ENCODE measurements at regions of chr16 and their contacts with region 1.

Region 1: DNA sequence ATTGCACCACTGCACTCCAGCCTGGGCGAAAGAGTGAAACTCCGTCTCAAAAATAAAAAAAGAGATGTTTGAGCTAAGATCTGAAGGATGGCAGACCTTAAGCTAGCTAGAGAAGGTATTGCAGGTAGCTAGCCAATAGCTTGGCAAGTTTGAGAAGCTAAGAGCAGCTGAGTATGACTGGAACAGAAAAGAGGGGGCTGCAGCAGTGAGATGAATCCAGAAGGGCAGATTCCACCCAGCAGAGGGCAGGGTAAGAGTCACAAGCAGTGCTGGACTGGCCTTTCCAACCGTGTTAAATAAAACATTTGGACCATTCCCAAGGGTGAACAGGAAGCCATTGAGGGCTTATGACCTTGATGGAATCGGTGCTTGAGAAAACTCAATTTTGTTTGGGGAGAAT is 5.7 kb upstream of the PHAF1 start:
- DNase-seq: no peak
- ATAC-seq: peak in 1 of 2 donors; percentile 38
- H3K4me3 ChIP-seq: no peak overlapping the region
- H3K27ac ChIP-seq: no peak overlapping the region
- H3K4me1 ChIP-seq: peaks cover 4 to 21% of the 10 kb centered on the region in 2 donors
- H3K27me3 ChIP-seq: no peaks in the 10 kb centered on the region
- CTCF ChIP-seq: peak in 4 of 5 experiments; percentile 5 to 42 (median 24)
- POLR2A ChIP-seq: no peak

Region 2: GRCh38 chr16:66845791-66846221 is 258.3 kb before region 1 on chr16:
- in situ Hi-C with region 1: no loop called
- intact Hi-C with region 1: no loop called
- DNase-seq: peak in 1 of 2 donors; percentile 22
- ATAC-seq: peak in 1 of 2 donors; percentile 77
- H3K4me3 ChIP-seq: no peak overlapping the region
- H3K27ac ChIP-seq: no peak overlapping the region
- H3K4me1 ChIP-seq: peaks cover 0 to 6% of the 10 kb centered on the region in 2 donors
- H3K27me3 ChIP-seq: peaks cover 25 to 30% (median 26%) of the 10 kb centered on the region in 3 donors
- CTCF ChIP-seq: no peak
- POLR2A ChIP-seq: no peak

Region 3: GRCh38 chr16:67017810-67018488 is 86.1 kb before region 1 on chr16:
- in situ Hi-C with region 1: no loop called
- intact Hi-C with region 1: loop called (anchors 5 kb)
- DNase-seq: peak; percentile 52 to 82
- ATAC-seq: peak; percentile 79 to 92
- H3K4me3 ChIP-seq: no peak overlapping the region
- H3K27ac ChIP-seq: no peak overlapping the region
- H3K4me1 ChIP-seq: peaks cover 5 to 7% of the 10 kb centered on the region in 2 donors
- H3K27me3 ChIP-seq: no peaks in the 10 kb centered on the region
- CTCF ChIP-seq: peak; percentile 64 to 85 (median 75)
- POLR2A ChIP-seq: no peak

Region 4: DNA sequence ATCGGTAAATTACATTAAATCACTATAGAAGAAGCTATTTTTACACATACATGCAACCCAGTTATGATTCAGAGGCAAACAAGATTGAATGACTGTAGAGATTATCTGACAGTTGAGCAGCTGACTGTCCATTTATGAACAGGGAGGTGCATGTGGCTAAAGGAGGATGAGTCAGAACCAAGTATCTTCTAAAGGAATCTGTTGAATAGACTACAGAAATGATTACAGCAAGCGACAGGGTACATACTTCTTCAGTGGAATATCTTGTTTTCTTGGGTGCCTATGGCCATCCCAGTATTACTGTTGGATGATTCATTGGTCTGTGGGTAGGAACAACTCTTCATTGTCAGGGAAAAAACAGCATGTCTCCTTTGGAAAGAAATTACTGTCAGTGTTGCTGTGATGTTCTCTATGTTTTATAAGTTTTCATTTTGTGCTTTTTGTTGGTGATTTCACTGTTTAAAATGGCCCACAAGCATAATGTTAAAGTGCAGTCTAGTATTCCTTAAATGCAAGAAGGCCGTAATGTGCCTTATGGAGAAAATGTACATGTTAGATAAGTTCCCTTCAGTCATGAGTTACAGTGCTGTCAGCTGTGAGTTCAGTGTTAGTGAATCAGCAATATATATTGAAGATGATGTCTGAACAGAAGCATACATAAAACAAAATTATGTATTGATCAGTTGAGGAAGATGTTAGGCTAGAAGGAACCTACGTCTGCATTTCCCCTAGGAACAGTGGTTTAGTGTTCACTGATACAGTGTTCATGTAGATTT is 48.2 kb before region 1 on chr16:
- in situ Hi-C with region 1: no loop called
- intact Hi-C with region 1: no loop called
- DNase-seq: peak; percentile 25 to 40
- ATAC-seq: peak; percentile 98 to 99
- H3K4me3 ChIP-seq: no peak overlapping the region
- H3K27ac ChIP-seq: peak overlapping the region; percentile 79 to 87 (median 86)
- H3K4me1 ChIP-seq: peaks cover 6 to 23% of the 10 kb centered on the region in 2 donors
- H3K27me3 ChIP-seq: no peaks in the 10 kb centered on the region
- CTCF ChIP-seq: no peak
- POLR2A ChIP-seq: no peak

Region 5: GRCh38 chr16:67120025-67120424 is 16.0 kb after region 1 on chr16:
- in situ Hi-C with region 1: no loop called
- intact Hi-C with region 1: no loop called
- DNase-seq: no peak
- ATAC-seq: no peak
- H3K4me3 ChIP-seq: no peak overlapping the region
- H3K27ac ChIP-seq: peak overlapping the region in 1 of 4 donors; percentile 31
- H3K4me1 ChIP-seq: peaks cover 12 to 34% of the 10 kb centered on the region in 2 donors
- H3K27me3 ChIP-seq: no peaks in the 10 kb centered on the region
- CTCF ChIP-seq: no peak
- POLR2A ChIP-seq: no peak

Measured in gastrocnemius medialis (tissue), 4 donors.